Activated naive CD4-positive, alpha-beta T cell treated with anti-CD3 and anti-CD28 coated beads, Interleukin-2, amount 10 ng/mL, durations not matched to agents 7 days and 5 days (primary cell): ENCODE measurements at regions of chr18 and their contacts with region 1.

Region 1: DNA sequence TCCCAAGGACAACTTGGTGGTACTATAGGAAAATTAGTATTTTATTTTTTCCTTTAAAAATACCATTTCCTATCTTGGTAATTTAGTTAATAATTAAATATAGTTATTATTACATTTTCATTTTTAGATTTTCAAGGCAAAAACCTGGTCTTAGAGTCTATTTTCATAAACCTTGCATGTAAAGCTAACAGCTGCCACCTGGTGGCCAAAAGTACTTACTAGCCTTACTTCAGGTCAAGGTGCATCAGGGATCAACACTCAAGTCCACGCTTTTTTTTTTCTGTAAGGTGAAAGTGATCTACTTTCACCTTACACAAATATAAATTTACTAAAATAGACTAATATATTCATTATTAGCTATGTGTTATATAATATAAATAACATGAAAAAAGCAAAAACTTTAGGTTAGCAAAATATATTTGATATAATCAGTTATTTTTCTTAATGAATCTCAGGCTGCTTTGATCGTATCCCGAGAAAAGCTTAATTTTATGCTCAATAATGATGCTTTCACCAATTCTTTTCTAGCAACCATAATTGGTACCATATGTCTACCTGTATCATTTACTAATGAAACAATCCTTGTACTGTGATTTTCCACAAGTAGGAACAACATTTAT is 62.5 kb downstream of the RELCH start:
- DNase-seq: peak; percentile 84
- H3K4me3 Mint-ChIP-seq: no peak overlapping the region
- H3K27ac Mint-ChIP-seq: no peak overlapping the region
- H3K4me1 Mint-ChIP-seq: no peaks in the 10 kb centered on the region
- H3K27me3 Mint-ChIP-seq: no peaks in the 10 kb centered on the region

Region 2: GRCh38 chr18:62186774-62187542 is 62.6 kb before region 1 on chr18 and contains the starts of genes PIGN and RELCH:
- CTCF ChIA-PET with region 1: interaction called, 84 read pairs
- DNase-seq: peak; percentile 98
- H3K4me3 Mint-ChIP-seq: peak within 1 kb of the TSS; percentile 98
- H3K27ac Mint-ChIP-seq: peak within 1 kb of the TSS; percentile 96
- H3K4me1 Mint-ChIP-seq: peaks cover 56% of the 10 kb centered on the region
- H3K27me3 Mint-ChIP-seq: no peaks in the 10 kb centered on the region

Region 3: GRCh38 chr18:62198259-62198658 is 51.3 kb before region 1 on chr18:
- CTCF ChIA-PET with region 1: interaction called, 10 read pairs
- DNase-seq: no peak
- H3K4me3 Mint-ChIP-seq: no peak overlapping the region
- H3K27ac Mint-ChIP-seq: no peak overlapping the region
- H3K4me1 Mint-ChIP-seq: peaks cover 16% of the 10 kb centered on the region
- H3K27me3 Mint-ChIP-seq: no peaks in the 10 kb centered on the region

Region 4: DNA sequence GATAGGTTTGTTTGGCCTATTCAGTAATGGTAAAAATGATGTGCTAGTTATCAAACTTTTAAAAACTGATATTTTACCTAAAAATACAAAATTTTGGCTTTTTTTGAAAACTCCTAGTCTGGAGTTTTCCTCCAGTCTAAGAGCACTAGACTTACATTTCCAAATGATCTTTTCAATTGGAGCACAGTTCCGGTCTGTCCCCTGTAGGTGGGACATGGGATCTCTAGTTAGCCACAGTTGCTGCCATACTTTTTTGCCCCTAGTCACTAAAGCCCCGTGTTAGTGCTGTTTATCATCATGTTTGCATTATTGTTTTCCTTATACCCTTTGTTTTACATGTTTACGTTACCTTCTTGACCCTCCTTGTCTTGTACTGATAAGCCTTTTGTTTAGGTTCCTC is 10.1 kb before region 1 on chr18:
- CTCF ChIA-PET with region 1: interaction called, 10 read pairs
- DNase-seq: no peak
- H3K4me3 Mint-ChIP-seq: no peak overlapping the region
- H3K27ac Mint-ChIP-seq: no peak overlapping the region
- H3K4me1 Mint-ChIP-seq: peaks cover 6% of the 10 kb centered on the region
- H3K27me3 Mint-ChIP-seq: no peaks in the 10 kb centered on the region

Region 5: DNA sequence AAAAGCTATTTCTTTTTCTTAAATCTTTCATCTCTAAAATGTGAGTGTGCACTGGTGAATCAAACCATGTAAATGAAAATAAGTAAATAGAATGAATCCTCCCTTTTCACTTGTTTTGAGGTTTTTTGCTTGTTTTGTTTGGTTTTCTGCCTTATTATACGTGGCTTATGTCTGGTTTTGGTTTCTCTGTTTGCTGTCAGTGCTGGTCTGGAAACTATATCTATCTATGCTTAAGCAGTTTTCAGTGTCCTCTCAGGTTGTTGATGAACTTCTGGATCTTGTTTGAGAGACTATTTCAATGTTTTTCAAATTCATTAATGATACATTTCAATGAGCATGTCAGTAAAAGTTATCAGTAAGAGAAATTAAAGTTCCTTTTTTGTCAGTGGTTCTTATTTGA is 27.5 kb after region 1 on chr18:
- CTCF ChIA-PET with region 1: no interaction called
- DNase-seq: no peak
- H3K4me3 Mint-ChIP-seq: no peak overlapping the region
- H3K27ac Mint-ChIP-seq: no peak overlapping the region
- H3K4me1 Mint-ChIP-seq: peaks cover 8% of the 10 kb centered on the region
- H3K27me3 Mint-ChIP-seq: no peaks in the 10 kb centered on the region

Region 6: DNA sequence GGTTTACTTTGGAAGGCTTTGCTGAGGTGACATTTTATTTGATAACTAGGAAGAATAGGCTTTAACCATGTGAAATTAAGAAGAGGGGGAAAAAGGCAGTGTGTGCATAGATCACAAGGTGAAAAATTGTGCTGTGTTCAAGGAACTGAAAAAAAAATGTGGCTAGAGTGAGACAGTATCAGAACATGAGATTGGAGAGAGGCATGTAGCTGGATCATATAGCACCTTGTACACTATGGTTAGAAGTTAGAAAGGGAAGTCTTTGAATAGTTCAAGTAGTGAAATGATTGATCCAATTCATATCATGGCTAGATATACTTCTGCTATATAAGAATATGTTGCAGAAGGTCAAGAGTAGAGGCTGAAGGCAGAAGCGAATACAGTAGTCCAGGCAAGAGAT is 63.3 kb after region 1 on chr18:
- CTCF ChIA-PET with region 1: no interaction called
- DNase-seq: no peak
- H3K4me3 Mint-ChIP-seq: no peak overlapping the region
- H3K27ac Mint-ChIP-seq: no peak overlapping the region
- H3K4me1 Mint-ChIP-seq: no peaks in the 10 kb centered on the region
- H3K27me3 Mint-ChIP-seq: peaks cover 8% of the 10 kb centered on the region